ENCODE measurements at regions of chr6 and their contacts with region 1.

Region 1: DNA sequence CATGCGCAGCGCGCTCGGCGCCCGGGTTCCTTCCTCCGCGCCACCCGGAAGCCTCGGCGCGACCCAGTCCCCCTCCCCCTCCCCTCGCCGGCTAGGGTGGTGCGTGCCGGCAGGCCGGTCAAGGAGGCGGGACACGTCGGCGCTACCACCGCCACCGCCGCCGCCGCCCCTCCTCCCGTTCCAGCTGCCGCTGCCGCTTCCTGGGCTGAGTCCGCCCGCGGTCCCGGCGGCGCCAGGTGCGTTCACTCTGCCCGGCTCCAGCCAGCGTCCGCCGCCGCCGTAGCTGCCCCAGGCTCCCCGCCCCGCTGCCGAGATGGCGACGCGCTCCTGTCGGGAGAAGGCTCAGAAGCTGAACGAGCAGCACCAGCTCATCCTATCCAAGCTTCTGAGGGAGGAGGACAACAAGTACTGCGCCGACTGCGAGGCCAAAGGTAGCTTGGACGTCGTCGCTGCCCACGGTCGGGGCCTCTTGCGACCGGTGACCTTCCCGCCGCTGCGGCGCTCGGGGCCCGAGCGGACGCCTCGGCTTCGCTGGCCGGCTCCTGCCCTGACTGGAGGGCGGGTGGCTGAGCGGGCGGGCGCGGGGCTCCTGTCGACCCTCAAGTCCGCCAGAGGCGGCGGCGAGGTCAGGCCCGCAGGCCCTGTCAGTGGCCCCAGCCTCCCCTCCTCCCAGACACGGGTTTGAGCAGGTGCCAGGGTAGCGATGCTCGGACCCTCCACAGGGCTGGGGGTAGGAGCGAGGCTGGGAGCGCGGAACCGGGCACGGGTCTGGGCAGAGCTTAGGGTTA is at the start of gene SMAP1:
- DNase-seq: peak; percentile 72
- ATAC-seq: peak; percentile 93
- H3K4me3 ChIP-seq: peak within 1 kb of the TSS; percentile 94
- H3K27ac ChIP-seq: peak within 1 kb of the TSS; percentile 81
- H3K4me1 ChIP-seq: peaks cover 4% of the 10 kb centered on the region; the same call in 1 of the 2 replicates
- H3K27me3 ChIP-seq: no peaks in the 10 kb centered on the region
- CTCF ChIP-seq: no peak
- EP300 ChIP-seq: peak in 1 of 2 experiments; percentile 15; a peak in 2 of 4 replicates
- POLR2A ChIP-seq: peak; percentile 95
- RAD21 ChIP-seq: no peak
- polyA plus RNA-seq, gene SMAP1: 13.7 to 15.1 TPM

Region 2: DNA sequence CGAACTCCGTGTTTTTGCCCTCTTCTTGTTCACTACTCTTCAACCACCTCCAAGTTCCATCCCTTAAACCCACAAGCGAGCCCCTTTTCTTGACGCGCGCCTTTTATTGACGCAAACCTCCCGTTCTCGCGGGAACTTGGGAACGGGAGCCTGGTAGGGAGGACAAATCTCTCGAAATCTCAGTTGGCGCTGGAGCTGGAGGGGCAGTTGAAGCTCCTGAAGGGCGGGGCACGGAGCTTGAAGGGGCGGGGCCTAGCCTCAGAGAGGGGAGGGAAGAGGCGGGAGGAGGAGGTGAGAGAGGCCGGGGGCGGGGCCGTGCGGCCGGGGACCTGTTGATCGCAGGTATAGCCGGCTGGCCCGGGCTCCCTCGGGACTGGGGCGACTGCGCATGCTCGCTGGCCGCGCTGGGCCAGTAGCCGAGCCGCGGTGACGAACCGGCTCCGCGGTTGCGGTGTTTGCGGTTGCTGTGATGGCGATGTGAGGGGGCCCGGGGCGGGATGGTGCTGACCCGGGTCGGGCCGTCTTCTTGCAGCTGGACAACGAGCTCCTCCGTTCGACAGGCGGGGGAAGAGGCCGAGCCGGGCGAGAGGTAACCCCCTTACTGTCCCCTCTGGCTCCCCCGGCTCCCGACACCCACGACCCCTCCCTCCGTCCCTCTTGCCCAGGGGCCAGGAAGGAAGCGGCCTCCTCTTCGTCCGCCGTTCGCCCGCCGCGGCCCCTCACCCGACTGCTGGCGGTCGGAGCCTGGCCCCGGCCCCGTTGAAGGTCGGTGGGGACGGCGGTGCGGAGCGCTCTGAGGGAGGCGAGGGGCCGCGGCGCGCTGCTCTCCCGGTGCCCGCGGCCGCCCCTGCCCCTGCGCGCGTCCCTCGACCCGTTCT is 254.6 kb before region 1 on chr6 and contains the start of gene FAM135A:
- CTCF ChIA-PET with region 1: interaction called, 5 read pairs
- POLR2A ChIA-PET with region 1: interaction called, 12 read pairs
- RAD21 ChIA-PET with region 1: interaction called, 6 read pairs
- SMC1A ChIA-PET with region 1: interaction called, 6 read pairs
- in situ Hi-C with region 1: no loop called
- intact Hi-C with region 1: loop called (anchors 5 kb)
- DNase-seq: peak; percentile 94
- ATAC-seq: peak; percentile 90
- H3K4me3 ChIP-seq: peak within 1 kb of the TSS; percentile 87
- H3K27ac ChIP-seq: peak within 1 kb of the TSS; percentile 74
- H3K4me1 ChIP-seq: no peaks in the 10 kb centered on the region
- H3K27me3 ChIP-seq: no peaks in the 10 kb centered on the region
- CTCF ChIP-seq: no peak
- EP300 ChIP-seq: no peak
- POLR2A ChIP-seq: peak; percentile 87
- RAD21 ChIP-seq: no peak
- polyA plus RNA-seq, gene FAM135A: 3.9 to 4.4 TPM

Region 3: GRCh38 chr6:70566751-70567382 is 101.0 kb before region 1 on chr6 and contains the start of gene SDHAF4:
- CTCF ChIA-PET with region 1: interaction called, 3 read pairs
- POLR2A ChIA-PET with region 1: interaction called, 11 read pairs
- RAD21 ChIA-PET with region 1: interaction called, 12 read pairs
- SMC1A ChIA-PET with region 1: interaction called, 10 read pairs
- in situ Hi-C with region 1: no loop called
- intact Hi-C with region 1: loop called (anchors 5 kb)
- DNase-seq: peak; percentile 63
- ATAC-seq: peak; percentile 99
- H3K4me3 ChIP-seq: peak within 1 kb of the TSS; percentile 76
- H3K27ac ChIP-seq: peak within 1 kb of the TSS; percentile 87
- H3K4me1 ChIP-seq: peaks cover 4% of the 10 kb centered on the region; the same call in 1 of the 2 replicates
- H3K27me3 ChIP-seq: no peaks in the 10 kb centered on the region
- CTCF ChIP-seq: peak in 2 of 3 experiments; percentile 5 to 14; a peak in 1 of 6 replicates
- EP300 ChIP-seq: no peak
- POLR2A ChIP-seq: peak; percentile 99
- RAD21 ChIP-seq: no peak
- polyA plus RNA-seq, gene SDHAF4: 14.8 to 19.1 TPM

Region 4: DNA sequence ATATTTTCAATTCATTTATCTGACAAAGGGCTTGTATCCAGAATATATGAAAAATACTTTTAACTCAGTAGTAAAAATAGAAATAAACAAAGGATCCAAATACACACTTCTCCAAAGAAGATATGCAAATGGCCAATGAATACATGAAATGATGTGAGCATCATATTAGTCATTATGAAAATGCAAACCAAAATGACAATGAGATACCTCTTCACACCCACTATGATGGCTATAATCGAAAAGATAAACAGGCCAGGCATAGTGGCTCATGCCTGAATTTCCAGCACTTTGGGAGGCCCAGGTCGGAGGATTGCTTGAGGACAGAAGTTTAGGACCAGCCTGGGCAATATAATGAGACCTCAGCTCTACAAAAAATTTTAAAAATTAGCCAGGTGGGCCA is 34.0 kb before region 1 on chr6:
- CTCF ChIA-PET with region 1: no interaction called
- POLR2A ChIA-PET with region 1: interaction called, 13 read pairs
- RAD21 ChIA-PET with region 1: no interaction called
- SMC1A ChIA-PET with region 1: no interaction called
- in situ Hi-C with region 1: no loop called
- intact Hi-C with region 1: no loop called
- DNase-seq: no peak
- ATAC-seq: peak; percentile 45
- H3K4me3 ChIP-seq: no peak overlapping the region
- H3K27ac ChIP-seq: no peak overlapping the region
- H3K4me1 ChIP-seq: no peaks in the 10 kb centered on the region
- H3K27me3 ChIP-seq: no peaks in the 10 kb centered on the region; a peak in 1 of 4 replicates
- CTCF ChIP-seq: no peak
- EP300 ChIP-seq: no peak
- POLR2A ChIP-seq: no peak
- RAD21 ChIP-seq: no peak

Region 5: GRCh38 chr6:70657706-70658105 is 10.2 kb before region 1 on chr6:
- CTCF ChIA-PET with region 1: interaction called, 3 read pairs
- POLR2A ChIA-PET with region 1: interaction called, 4 read pairs
- RAD21 ChIA-PET with region 1: interaction called, 3 read pairs
- SMC1A ChIA-PET with region 1: interaction called, 15 read pairs
- in situ Hi-C with region 1: no loop called
- intact Hi-C with region 1: no loop called
- DNase-seq: peak; percentile 37
- ATAC-seq: peak; percentile 95
- H3K4me3 ChIP-seq: no peak overlapping the region
- H3K27ac ChIP-seq: no peak overlapping the region
- H3K4me1 ChIP-seq: no peaks in the 10 kb centered on the region; the same call in 1 of the 2 replicates
- H3K27me3 ChIP-seq: no peaks in the 10 kb centered on the region
- CTCF ChIP-seq: no peak
- EP300 ChIP-seq: no peak
- POLR2A ChIP-seq: no peak
- RAD21 ChIP-seq: no peak

Measured in GM12878 (cell line).